ENCODE measurements at regions of chr2 and their contacts with region 1.

Region 1: DNA sequence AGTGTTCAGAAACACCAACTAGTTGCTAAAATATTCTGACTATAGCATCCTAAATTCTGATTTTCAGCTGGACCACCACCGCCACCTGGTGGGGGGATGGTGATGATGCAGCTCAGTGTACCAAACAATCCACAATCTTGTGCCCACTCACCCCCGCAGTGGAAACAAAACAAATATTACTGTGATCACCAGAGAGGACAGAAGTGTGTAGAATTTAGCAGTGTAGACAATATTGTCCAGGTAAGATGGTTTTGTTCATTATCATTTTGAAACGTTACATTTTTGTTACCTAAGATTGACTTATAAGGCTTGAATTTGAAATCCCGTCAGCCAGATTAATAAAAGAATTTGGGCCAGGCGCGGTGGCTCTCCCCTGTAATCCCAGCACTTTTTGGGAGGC is 31.7 kb upstream of the UBXN4 start:
- DNase-seq: peak; percentile 28 to 66 (median 50)
- ATAC-seq: peak in 1 of 4 donors; percentile 54
- H3K4me3 ChIP-seq: no peak overlapping the region
- H3K27ac ChIP-seq: no peak overlapping the region
- H3K4me1 ChIP-seq: no peaks in the 10 kb centered on the region
- H3K27me3 ChIP-seq: no peaks in the 10 kb centered on the region
- CTCF ChIP-seq: peak in 11 of 12 donors; percentile 91 to 99 (median 95)
- POLR2A ChIP-seq: no peak

Region 2: DNA sequence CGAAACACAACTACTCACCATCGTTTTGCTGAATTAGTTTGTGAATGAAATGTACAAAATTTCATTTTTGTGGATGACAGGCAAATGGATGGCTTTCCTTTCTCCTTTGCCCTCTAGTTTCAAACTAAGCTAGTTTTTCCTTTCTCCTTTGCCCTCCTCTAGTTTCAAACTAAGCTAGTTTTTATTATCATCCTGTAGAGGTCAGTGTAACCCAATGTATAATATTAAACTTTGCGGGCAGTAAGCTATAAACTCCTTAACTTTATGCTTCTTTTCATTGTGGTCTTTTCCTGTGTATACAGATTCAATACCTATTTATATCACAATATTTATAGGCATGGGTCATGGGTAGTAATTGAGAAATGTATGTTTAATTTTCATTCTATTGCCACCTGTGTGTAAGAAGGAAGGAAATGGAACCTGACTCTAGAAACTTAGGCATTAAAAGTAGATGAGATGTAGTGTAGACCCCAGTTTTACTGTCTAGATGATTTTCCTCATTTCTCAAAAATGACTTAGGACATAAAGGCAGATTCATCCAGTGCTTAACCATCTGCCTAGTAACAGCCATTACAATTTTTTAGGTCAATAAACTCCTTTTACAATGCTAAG is 720.9 kb before region 1 on chr2:
- intact Hi-C with region 1: loop called in 7 of 10 experiments (anchors 2 to 5 kb)
- DNase-seq: no peak
- ATAC-seq: peak in 1 of 4 donors; percentile 49
- H3K4me3 ChIP-seq: no peak overlapping the region
- H3K27ac ChIP-seq: no peak overlapping the region
- H3K4me1 ChIP-seq: no peaks in the 10 kb centered on the region
- H3K27me3 ChIP-seq: peaks cover 0 to 4% (median 0%) of the 10 kb centered on the region in 9 donors
- CTCF ChIP-seq: peak in 11 of 12 donors; percentile 20 to 59 (median 41)
- POLR2A ChIP-seq: no peak

Region 3: DNA sequence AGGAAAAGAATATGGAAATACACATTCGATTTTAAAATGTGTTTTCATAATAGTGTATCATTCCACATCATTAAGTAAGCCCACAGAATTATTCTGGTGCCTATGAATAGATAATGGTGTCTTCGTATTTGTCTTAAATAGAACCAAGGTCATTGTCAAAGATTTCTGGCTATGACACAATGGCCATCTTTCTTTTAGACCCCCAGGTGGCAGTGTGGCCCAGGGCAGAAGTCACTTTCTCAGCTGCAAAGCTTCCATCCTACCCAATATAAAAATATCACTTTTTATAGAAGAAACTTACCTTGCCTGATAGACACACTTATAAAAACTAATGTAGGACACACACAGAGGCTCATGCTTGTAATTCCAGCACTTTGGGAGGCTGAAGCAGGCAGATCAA is 236.4 kb before region 1 on chr2:
- intact Hi-C with region 1: loop called in 9 of 10 experiments (anchors 2 to 10 kb)
- DNase-seq: no peak
- ATAC-seq: peak in 2 of 4 donors; percentile 33 to 41
- H3K4me3 ChIP-seq: no peak overlapping the region
- H3K27ac ChIP-seq: no peak overlapping the region
- H3K4me1 ChIP-seq: no peaks in the 10 kb centered on the region
- H3K27me3 ChIP-seq: no peaks in the 10 kb centered on the region
- CTCF ChIP-seq: peak; percentile 24 to 62 (median 47)
- POLR2A ChIP-seq: no peak

Measured in heart left ventricle (tissue), 16 donors.